Left lung (tissue), 14 donors: ENCODE measurements at regions of chr4 and their contacts with region 1.

Region 1: GRCh38 chr4:9762823-9763475 is 18.5 kb upstream of the DRD5 start:
- DNase-seq: peak in 3 of 4 donors; percentile 48 to 81 (median 59)
- ATAC-seq: peak; percentile 52
- H3K4me3 ChIP-seq: no peak overlapping the region
- H3K27ac ChIP-seq: no peak overlapping the region
- H3K4me1 ChIP-seq: no peaks in the 10 kb centered on the region
- H3K27me3 ChIP-seq: peaks cover 0 to 16% of the 10 kb centered on the region in 2 donors
- CTCF ChIP-seq: peak; percentile 59 to 66

Region 2: DNA sequence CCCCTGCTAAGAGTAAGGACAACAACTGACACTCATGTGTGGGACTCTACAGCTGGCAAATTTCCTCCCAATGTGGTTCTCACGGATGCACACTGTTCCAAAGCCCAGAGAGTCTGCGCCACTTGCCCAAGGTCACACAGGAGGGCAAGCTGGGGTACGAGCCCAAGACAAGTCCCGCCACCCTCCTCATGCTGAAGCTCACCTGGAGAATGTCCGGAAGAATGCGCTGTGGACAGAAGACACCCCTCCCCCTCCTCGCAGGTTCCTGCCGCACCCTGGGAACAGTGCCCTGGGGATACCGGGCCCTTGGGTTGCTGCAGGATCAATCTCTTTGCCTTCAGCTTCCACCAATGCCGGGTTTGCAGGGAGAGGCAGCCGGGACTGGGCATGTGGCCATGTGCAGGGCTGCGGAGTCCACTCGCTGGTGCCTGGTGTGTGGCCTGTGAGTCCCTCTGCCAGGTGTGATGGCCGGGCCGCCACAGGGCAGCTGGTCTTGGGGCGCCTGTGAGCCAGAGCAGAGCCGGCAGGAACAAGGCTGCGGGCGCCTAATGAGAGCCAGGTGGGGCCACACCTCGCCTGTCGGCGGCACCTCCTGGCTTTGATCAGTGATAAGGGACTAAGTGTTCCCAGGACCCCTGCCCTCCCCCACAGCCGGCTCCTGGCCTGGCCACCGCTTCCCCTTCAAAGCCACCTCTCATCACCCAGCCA is 1038.0 kb before region 1 on chr4:
- intact Hi-C with region 1: no loop called
- DNase-seq: peak in 2 of 4 donors; percentile 20 to 71
- ATAC-seq: no peak
- H3K4me3 ChIP-seq: no peak overlapping the region
- H3K27ac ChIP-seq: no peak overlapping the region
- H3K4me1 ChIP-seq: no peaks in the 10 kb centered on the region
- H3K27me3 ChIP-seq: peaks cover 8 to 60% of the 10 kb centered on the region in 2 donors
- CTCF ChIP-seq: no peak

Region 3: GRCh38 chr4:9898596-9899305 is 135.8 kb after region 1 on chr4:
- intact Hi-C with region 1: loop called in 1 of 2 experiments (anchors 10 kb)
- DNase-seq: peak in 3 of 4 donors; percentile 16 to 57 (median 55)
- ATAC-seq: peak; percentile 94
- H3K4me3 ChIP-seq: no peak overlapping the region
- H3K27ac ChIP-seq: no peak overlapping the region
- H3K4me1 ChIP-seq: peaks cover 0 to 4% of the 10 kb centered on the region in 2 donors
- H3K27me3 ChIP-seq: no peaks in the 10 kb centered on the region
- CTCF ChIP-seq: peak; percentile 9 to 30

Region 4: GRCh38 chr4:10018818-10019461 is 256.0 kb after region 1 on chr4:
- intact Hi-C with region 1: loop called in 1 of 2 experiments (anchors 5 kb)
- DNase-seq: peak; percentile 94 to 99 (median 98)
- ATAC-seq: peak; percentile 98
- H3K4me3 ChIP-seq: peak overlapping the region; percentile 23 to 52
- H3K27ac ChIP-seq: peak overlapping the region; percentile 82 to 89
- H3K4me1 ChIP-seq: peaks cover 4 to 54% of the 10 kb centered on the region in 2 donors
- H3K27me3 ChIP-seq: no peaks in the 10 kb centered on the region
- CTCF ChIP-seq: peak; percentile 93 to 98

Region 5: GRCh38 chr4:10069075-10069642 is 306.2 kb after region 1 on chr4:
- intact Hi-C with region 1: loop called in 1 of 2 experiments (anchors 5 kb)
- DNase-seq: no peak
- ATAC-seq: no peak
- H3K4me3 ChIP-seq: no peak overlapping the region
- H3K27ac ChIP-seq: no peak overlapping the region
- H3K4me1 ChIP-seq: peaks cover 0 to 3% of the 10 kb centered on the region in 2 donors
- H3K27me3 ChIP-seq: no peaks in the 10 kb centered on the region
- CTCF ChIP-seq: no peak